ENCODE measurements at regions of chr16 and their contacts with region 1.

Region 1: GRCh38 chr16:30698139-30698815 is 694 bp upstream of the SRCAP start:
- DNase-seq: peak; percentile 98
- H3K4me3 Mint-ChIP-seq: peak overlapping the region; percentile 86
- H3K27ac Mint-ChIP-seq: peak overlapping the region; percentile 100
- H3K4me1 Mint-ChIP-seq: peaks cover 14% of the 10 kb centered on the region
- H3K27me3 Mint-ChIP-seq: no peaks in the 10 kb centered on the region
- CTCF ChIP-seq: no peak

Region 2: GRCh38 chr16:30551781-30552180 is 146.5 kb before region 1 on chr16:
- CTCF ChIA-PET with region 1: no interaction called
- POLR2A ChIA-PET with region 1: no interaction called
- intact Hi-C with region 1: no loop called
- DNase-seq: no peak
- H3K4me3 Mint-ChIP-seq: no peak overlapping the region
- H3K27ac Mint-ChIP-seq: no peak overlapping the region
- H3K4me1 Mint-ChIP-seq: peaks cover 5% of the 10 kb centered on the region
- H3K27me3 Mint-ChIP-seq: no peaks in the 10 kb centered on the region
- CTCF ChIP-seq: no peak

Region 3: GRCh38 chr16:30621765-30622164 is 76.5 kb before region 1 on chr16:
- CTCF ChIA-PET with region 1: no interaction called
- POLR2A ChIA-PET with region 1: no interaction called
- intact Hi-C with region 1: no loop called
- DNase-seq: peak; percentile 31
- H3K4me3 Mint-ChIP-seq: no peak overlapping the region
- H3K27ac Mint-ChIP-seq: no peak overlapping the region
- H3K4me1 Mint-ChIP-seq: no peaks in the 10 kb centered on the region
- H3K27me3 Mint-ChIP-seq: no peaks in the 10 kb centered on the region
- CTCF ChIP-seq: no peak

Region 4: GRCh38 chr16:30650369-30651123 is 47.7 kb before region 1 on chr16 and contains the start of gene PRR14:
- CTCF ChIA-PET with region 1: interaction called, 3 read pairs
- POLR2A ChIA-PET with region 1: interaction called, 10 read pairs
- intact Hi-C with region 1: no loop called
- DNase-seq: peak; percentile 99
- H3K4me3 Mint-ChIP-seq: peak within 1 kb of the TSS; percentile 98
- H3K27ac Mint-ChIP-seq: peak within 1 kb of the TSS; percentile 94
- H3K4me1 Mint-ChIP-seq: peaks cover 12% of the 10 kb centered on the region
- H3K27me3 Mint-ChIP-seq: no peaks in the 10 kb centered on the region
- CTCF ChIP-seq: no peak
- total RNA-seq, gene PRR14: 39.4 and 41.4 TPM in 2 replicates

Region 5: GRCh38 chr16:30657866-30658730 is 40.2 kb before region 1 on chr16 and contains the start of gene FBRS:
- CTCF ChIA-PET with region 1: interaction called, 14 read pairs
- POLR2A ChIA-PET with region 1: interaction called, 14 read pairs
- intact Hi-C with region 1: loop called (anchors 1 kb)
- DNase-seq: peak; percentile 100
- H3K4me3 Mint-ChIP-seq: peak within 1 kb of the TSS; percentile 93
- H3K27ac Mint-ChIP-seq: peak within 1 kb of the TSS; percentile 100
- H3K4me1 Mint-ChIP-seq: peaks cover 21% of the 10 kb centered on the region
- H3K27me3 Mint-ChIP-seq: no peaks in the 10 kb centered on the region
- CTCF ChIP-seq: peak; percentile 57
- total RNA-seq, gene FBRS: 69.1 and 80.8 TPM in 2 replicates

Region 6: DNA sequence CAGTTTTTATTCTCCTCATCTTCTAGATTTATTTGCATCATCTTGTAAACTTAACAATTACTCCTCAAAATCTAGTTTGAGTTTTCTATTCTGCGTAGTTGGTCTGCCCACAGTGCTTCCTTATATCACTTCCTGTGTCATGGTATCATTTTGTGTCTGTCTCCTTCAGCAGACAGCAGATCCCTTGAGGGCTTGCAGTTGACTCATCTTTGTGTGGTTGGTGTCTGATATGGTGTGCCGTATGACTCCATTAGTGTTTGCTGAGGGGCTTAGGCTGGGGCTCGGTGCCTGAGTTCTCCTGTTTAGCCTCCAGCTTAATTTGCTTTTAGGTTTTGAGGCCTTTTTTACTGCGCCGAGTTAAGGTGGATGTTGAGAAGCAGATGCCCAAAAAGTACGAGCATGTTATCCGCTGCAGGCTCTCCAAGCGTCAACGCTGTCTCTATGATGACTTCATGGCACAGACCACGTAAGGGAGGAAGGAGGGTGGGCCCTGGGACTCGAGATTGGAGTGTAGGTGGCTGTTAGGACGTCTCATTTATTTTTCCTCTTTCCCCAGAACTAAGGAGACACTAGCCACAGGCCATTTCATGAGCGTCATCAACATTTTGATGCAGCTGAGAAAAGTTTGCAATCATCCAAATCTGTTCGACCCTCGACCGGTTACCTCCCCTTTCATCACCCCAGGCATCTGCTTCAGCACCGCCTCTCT is 17.6 kb after region 1 on chr16:
- CTCF ChIA-PET with region 1: interaction called, 7 read pairs
- POLR2A ChIA-PET with region 1: interaction called, 6 read pairs
- intact Hi-C with region 1: loop called (anchors 1 kb)
- DNase-seq: peak; percentile 30
- H3K4me3 Mint-ChIP-seq: peak overlapping the region; percentile 19
- H3K27ac Mint-ChIP-seq: peak overlapping the region; percentile 78
- H3K4me1 Mint-ChIP-seq: peaks cover 37% of the 10 kb centered on the region
- H3K27me3 Mint-ChIP-seq: no peaks in the 10 kb centered on the region
- CTCF ChIP-seq: no peak

Region 7: DNA sequence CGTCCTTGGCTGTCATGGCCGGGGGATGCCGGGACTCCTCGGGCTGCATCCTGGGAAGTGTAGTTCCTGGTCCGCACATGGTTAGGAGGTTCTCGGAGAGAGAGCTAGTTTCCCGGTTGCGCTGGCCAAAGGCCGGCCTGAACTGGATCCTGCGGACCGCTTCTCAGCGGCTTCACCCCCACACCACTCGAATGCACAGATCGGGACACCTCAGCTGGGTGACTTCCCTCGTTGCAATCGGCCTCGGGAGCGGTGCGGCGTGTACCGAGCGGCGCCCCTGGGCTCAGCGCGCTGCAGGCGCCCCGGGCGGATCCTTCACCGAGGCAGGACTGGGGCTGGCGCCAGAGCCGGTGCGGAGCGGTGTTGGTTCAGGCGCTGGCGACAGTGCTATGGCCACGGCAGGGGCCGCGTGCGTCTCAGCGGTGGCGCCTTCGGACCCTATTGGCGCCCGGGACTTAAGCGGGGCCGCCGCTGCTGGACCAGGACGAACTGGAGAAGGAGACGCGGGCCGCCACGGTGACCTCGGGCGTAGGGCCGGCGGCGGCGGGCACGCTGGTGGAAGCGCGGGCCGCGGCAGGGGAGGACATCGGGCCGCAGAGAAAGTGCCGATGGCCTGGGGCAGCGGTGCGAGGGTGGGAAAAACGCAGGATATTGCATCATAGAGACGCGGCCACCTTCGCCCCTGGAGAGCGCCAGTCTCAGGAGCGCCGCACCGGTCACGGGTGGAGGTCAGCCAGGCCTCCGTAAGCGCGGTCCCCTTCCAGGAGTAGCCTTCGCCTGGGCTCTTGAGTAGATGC is 77.3 kb after region 1 on chr16:
- CTCF ChIA-PET with region 1: no interaction called
- POLR2A ChIA-PET with region 1: interaction called, 10 read pairs
- intact Hi-C with region 1: no loop called
- DNase-seq: peak; percentile 87
- H3K4me3 Mint-ChIP-seq: peak overlapping the region; percentile 85
- H3K27ac Mint-ChIP-seq: peak overlapping the region; percentile 82
- H3K4me1 Mint-ChIP-seq: peaks cover 22% of the 10 kb centered on the region
- H3K27me3 Mint-ChIP-seq: no peaks in the 10 kb centered on the region
- CTCF ChIP-seq: no peak